AG04449 (cell line): ENCODE measurements at regions of chr19 and their contacts with region 1.

Region 1: DNA sequence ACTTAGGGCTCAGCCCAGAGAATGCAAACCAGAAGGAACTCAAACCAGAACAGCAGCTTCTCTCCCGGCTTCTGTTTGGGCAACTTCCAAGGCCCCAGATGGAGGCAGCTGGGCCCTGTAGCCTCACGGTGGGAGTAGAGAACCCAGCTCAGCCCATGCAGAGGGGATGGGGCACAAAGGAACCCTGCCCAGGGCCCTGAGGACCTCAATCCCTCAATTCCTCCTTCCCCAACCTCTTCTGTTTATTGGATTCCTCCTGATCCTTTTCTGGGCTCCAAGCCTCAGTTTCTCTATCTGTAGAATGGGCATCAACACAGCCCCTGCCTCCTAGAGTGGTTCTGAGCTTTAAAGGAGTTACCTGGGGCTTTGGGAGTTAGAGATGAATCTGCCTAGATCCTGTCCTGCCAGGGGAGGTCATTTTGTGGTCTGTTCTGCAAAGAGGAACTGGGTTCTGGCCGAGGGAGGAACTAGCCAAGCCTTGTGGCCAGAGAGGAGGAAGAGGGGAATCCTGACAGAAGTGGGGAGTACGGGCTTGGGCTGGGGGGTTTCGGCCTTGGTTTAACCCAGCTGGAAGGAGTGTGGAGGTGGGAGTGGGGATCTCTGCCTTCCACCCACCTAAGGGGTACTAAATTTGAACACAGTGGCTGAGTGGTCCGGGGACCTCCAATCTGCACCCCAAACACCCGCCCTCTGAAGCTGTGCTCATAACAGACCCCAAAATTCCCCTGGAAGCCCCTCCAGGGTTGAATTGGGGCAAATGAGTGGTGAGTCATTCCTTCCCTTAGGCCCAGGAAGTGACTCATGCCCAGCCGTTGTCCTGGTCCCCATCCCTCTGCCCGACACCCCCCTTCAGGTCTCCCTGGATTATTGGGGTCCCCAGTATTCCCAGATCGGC is 2.7 kb downstream of the ADGRE5 start:
- DNase-seq: no peak
- H3K4me3 ChIP-seq: peak overlapping the region; percentile 6
- CTCF ChIP-seq: peak; percentile 3

Region 2: DNA sequence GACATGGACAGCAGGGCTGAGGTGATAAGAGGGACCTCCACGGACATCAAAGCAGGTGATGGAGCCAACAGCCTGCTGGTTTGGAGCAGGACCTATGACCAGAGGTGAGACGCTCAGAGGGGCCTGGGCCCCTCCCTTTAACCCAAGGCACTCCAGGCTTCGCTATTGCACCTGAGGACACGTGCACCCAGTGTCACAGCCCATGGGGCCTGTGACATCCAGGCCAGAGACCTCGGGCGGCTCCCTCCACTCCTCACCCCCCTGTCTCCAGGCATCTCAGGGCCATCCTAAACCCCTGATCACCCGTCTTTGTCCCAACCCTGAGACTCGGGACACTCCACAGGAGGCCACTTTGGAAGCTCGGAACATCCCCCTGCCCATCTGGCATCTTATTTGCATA is 10.3 kb after region 1 on chr19:
- CTCF ChIA-PET with region 1: no interaction called
- POLR2A ChIA-PET with region 1: no interaction called
- DNase-seq: no peak
- H3K4me3 ChIP-seq: no peak overlapping the region
- CTCF ChIP-seq: no peak

Region 3: DNA sequence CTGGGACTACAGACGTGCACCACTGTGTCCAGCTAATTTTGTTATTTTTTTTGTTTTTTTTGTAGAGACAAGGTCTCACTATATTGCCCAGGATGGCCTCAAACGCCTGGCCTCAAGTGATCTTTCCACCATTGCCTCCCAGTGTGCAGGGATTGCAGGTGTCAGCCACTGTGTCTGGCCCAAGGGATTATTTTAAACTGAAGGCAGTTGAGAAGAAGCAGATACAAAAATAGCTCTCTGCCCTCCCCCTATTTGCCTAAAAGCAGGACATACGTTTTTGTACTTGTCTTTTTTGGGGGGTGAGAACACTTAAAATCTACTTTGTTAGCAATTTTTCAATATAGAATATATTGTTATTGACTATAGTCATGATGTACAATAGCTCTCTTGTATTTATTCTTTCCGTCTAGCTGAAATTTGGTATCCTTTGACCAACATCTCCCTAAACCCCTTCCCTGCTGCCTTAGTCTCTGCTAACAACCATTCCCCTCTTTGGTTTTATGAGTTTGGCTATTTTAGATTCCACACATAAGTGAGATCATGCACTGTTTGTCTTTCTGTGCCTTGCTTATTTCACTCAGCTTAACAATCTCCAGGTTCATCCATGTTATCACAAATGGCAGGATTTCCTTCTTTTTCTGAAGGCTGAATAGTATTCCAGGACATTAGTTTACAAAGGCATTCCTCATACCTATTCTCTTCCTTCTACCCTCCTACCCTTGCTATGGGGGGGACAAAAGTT is 255.8 kb after region 1 on chr19:
- CTCF ChIA-PET with region 1: no interaction called
- POLR2A ChIA-PET with region 1: no interaction called
- DNase-seq: no peak
- H3K4me3 ChIP-seq: no peak overlapping the region
- CTCF ChIP-seq: no peak

Region 4: DNA sequence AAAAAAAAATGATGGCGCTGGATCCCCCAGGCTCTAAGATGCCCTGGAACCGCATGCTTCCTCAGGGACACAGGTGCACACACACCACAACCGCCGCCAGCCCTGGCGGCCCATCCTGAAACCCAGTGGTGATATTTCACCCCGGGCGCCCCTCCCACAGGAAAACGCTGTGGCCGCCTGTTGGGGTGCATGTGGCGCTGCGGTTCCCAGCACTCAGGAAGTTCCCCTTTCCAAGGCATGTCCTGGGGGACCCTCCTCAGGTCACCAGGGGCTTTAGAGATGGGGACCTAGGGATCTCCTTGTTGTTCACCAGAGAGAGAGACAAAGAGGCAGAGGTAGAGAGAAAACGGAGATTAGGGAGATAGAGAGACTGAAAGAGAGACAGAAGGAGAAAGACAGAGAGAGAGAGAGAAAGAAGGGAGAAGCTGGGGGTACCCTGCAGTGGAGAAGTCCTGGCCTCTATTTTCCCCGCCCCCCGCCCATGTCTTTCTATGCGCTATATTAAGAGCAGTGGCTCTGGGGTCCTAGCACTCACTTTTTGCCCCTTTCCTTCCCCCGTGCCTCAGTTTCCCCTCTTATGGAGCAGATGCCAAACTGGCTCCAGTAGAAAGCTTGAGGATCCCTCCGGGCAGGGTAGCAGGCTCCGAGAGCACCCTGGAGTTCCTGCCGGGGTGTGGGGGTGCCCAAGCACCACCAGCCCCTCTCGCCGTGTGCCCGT is 392.1 kb after region 1 on chr19:
- CTCF ChIA-PET with region 1: no interaction called
- POLR2A ChIA-PET with region 1: interaction called, 21 read pairs
- DNase-seq: no peak
- H3K4me3 ChIP-seq: no peak overlapping the region
- CTCF ChIP-seq: no peak